MCF 10A (cell line): ENCODE measurements at regions of chr4 and their contacts with region 1.

Region 1: GRCh38 chr4:84503495-84504437 is 4.7 kb upstream of the NKX6-1 start:
- DNase-seq: peak; percentile 77
- H3K4me3 Mint-ChIP-seq: no peak overlapping the region
- H3K27ac Mint-ChIP-seq: no peak overlapping the region
- H3K4me1 Mint-ChIP-seq: peaks cover 6% of the 10 kb centered on the region
- H3K27me3 Mint-ChIP-seq: peaks cover 49% of the 10 kb centered on the region
- CTCF ChIP-seq: peak; percentile 67

Region 2: DNA sequence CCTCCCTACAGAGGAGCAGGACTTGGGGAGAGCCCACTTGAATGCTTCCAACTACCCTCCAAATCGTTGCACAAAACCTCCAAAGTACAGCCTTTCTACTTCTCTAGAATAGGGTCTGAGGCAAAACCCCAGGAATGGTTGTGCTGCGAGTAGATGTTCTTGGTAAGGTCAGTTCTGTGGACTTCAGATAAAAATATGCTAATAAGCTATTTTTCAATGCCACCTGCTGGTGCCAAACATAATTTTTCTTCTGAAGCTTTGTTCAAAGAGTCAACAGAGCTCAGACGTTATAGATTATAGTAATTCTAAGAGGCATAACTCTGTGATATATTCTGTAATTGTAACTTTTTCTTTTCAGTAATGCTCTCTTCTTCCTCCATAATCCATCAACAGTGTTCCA is 542.2 kb before region 1 on chr4:
- CTCF ChIA-PET with region 1: no interaction called
- POLR2A ChIA-PET with region 1: no interaction called
- intact Hi-C with region 1: loop called (anchors 2 kb)
- DNase-seq: peak; percentile 39
- H3K4me3 Mint-ChIP-seq: no peak overlapping the region
- H3K27ac Mint-ChIP-seq: no peak overlapping the region
- H3K4me1 Mint-ChIP-seq: no peaks in the 10 kb centered on the region
- H3K27me3 Mint-ChIP-seq: no peaks in the 10 kb centered on the region
- CTCF ChIP-seq: peak; percentile 41

Region 3: GRCh38 chr4:84151574-84151973 is 352.2 kb before region 1 on chr4:
- CTCF ChIA-PET with region 1: interaction called, 6 read pairs
- POLR2A ChIA-PET with region 1: interaction called, 3 read pairs
- intact Hi-C with region 1: loop called (anchors 2 kb)
- DNase-seq: peak; percentile 26
- H3K4me3 Mint-ChIP-seq: no peak overlapping the region
- H3K27ac Mint-ChIP-seq: no peak overlapping the region
- H3K4me1 Mint-ChIP-seq: no peaks in the 10 kb centered on the region
- H3K27me3 Mint-ChIP-seq: peaks cover 37% of the 10 kb centered on the region
- CTCF ChIP-seq: no peak

Region 4: DNA sequence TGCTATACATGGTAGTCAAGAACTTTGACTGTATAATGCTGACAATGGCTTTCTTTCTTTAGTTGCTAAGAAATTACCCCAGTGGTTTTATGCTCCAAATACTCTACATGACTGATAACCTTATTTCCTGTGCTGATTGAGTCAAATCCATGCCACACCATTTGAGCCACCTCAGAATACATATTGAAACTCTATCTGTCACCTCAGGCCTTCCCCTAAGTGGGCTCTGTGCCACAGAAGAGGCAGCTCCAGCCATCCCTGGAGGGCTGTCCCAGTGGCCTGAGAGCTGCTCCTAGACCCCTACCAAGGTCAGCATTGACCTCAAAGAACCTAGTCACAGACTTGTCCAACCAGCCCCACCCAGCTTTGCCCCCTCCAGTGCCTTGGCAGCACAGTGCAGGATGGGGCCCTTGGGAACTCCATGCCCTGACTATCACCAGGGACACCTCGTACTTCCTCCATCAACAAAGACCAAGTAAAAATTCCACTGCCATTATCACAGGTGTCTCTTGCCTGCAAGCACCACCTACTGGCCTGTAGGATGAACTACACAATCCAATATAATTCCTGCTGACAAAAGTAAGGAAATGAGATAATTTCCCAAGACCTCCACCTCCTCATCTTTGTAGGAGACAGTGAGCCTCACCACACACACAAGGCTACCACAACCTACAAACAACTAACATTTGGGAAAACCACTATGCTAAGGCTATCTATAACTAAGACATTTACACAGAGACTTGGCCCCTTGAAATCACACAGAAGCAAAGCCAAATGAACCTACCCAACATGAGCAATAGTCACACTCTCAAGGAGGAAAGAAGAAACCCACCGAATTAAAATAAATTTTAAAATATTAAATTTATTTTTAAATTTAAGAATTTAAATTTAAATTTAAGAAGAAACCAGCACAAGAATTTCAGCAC is 244.6 kb before region 1 on chr4:
- CTCF ChIA-PET with region 1: interaction called, 6 read pairs
- POLR2A ChIA-PET with region 1: no interaction called
- intact Hi-C with region 1: loop called (anchors 10 kb)
- DNase-seq: peak; percentile 53
- H3K4me3 Mint-ChIP-seq: no peak overlapping the region
- H3K27ac Mint-ChIP-seq: no peak overlapping the region
- H3K4me1 Mint-ChIP-seq: peaks cover 5% of the 10 kb centered on the region
- H3K27me3 Mint-ChIP-seq: peaks cover 80% of the 10 kb centered on the region
- CTCF ChIP-seq: peak; percentile 69

Region 5: DNA sequence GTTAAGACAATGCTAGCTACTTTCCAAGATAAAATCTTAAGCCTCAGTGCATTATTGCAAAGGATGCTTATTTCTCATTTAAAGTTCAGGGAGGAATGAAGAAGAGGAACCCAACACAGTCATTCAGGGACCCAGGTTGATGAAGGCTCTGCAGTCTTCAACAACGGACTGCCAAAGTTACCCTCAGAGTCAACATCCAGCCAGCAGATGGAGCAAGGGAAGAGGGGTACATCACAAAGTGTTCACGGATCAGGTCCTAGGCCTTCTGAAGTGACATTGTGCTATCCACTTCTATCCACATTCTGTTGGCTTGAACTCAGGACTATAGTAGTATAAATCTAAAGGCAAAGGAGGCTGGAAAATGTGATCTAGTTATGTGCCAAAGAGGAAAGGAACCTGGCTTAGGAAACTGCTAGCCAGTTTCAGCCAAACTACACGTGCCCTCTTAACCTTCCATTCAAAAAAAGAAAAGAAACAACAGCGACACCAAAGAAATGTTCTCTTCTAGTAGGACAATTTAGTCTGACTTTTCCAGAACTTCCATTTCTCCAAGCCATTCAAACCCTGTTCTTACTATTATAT is 33.5 kb before region 1 on chr4:
- CTCF ChIA-PET with region 1: interaction called, 5 read pairs
- POLR2A ChIA-PET with region 1: no interaction called
- intact Hi-C with region 1: loop called (anchors 1 kb)
- DNase-seq: peak; percentile 15
- H3K4me3 Mint-ChIP-seq: no peak overlapping the region
- H3K27ac Mint-ChIP-seq: no peak overlapping the region
- H3K4me1 Mint-ChIP-seq: no peaks in the 10 kb centered on the region
- H3K27me3 Mint-ChIP-seq: peaks cover 43% of the 10 kb centered on the region
- CTCF ChIP-seq: peak; percentile 15

Region 6: DNA sequence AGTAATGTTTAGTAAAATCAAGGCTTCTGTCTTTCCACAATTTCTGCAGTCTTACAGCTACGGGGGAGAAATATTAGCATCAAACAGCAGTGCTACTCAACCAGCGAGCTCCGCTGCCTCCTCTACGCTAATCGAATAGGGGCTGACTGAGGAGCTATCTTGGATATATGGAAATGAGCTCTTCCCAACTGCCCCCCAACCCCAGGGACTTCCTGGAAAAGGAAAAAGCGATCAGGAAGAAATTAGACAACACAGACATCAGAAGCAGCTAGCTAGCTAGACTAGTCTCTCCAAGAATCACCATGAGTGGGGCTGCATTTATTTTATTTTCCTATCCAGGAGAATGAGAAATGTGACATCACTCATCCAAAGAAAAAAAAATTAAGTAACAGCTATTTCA is 12.3 kb before region 1 on chr4:
- CTCF ChIA-PET with region 1: interaction called, 12 read pairs
- POLR2A ChIA-PET with region 1: interaction called, 3 read pairs
- intact Hi-C with region 1: no loop called
- DNase-seq: no peak
- H3K4me3 Mint-ChIP-seq: no peak overlapping the region
- H3K27ac Mint-ChIP-seq: no peak overlapping the region
- H3K4me1 Mint-ChIP-seq: peaks cover 9% of the 10 kb centered on the region
- H3K27me3 Mint-ChIP-seq: peaks cover 68% of the 10 kb centered on the region
- CTCF ChIP-seq: no peak